CD14-positive monocyte (primary cell): ENCODE measurements at regions of chr10 and their contacts with region 1.

Region 1: GRCh38 chr10:49540066-49540797 is 1.3 kb upstream of the ERCC6 start:
- DNase-seq: peak in 2 of 3 donors; percentile 30 to 52
- H3K4me3 ChIP-seq: peak overlapping the region; percentile 50 to 78 (median 64)
- H3K4me3 Mint-ChIP-seq: peak overlapping the region; percentile 90 to 94
- H3K27ac ChIP-seq: peak overlapping the region; percentile 94 to 100
- H3K27ac Mint-ChIP-seq: peak overlapping the region in 6 of 7 donors; percentile 94 to 99 (median 96)
- H3K4me1 ChIP-seq: peaks cover 30 to 40% of the 10 kb centered on the region in 2 donors
- H3K4me1 Mint-ChIP-seq: peaks cover 43% of the 10 kb centered on the region
- H3K27me3 ChIP-seq: no peaks in the 10 kb centered on the region
- H3K27me3 Mint-ChIP-seq: peaks cover 2% of the 10 kb centered on the region in 3 donors
- CTCF ChIP-seq: no peak

Region 2: DNA sequence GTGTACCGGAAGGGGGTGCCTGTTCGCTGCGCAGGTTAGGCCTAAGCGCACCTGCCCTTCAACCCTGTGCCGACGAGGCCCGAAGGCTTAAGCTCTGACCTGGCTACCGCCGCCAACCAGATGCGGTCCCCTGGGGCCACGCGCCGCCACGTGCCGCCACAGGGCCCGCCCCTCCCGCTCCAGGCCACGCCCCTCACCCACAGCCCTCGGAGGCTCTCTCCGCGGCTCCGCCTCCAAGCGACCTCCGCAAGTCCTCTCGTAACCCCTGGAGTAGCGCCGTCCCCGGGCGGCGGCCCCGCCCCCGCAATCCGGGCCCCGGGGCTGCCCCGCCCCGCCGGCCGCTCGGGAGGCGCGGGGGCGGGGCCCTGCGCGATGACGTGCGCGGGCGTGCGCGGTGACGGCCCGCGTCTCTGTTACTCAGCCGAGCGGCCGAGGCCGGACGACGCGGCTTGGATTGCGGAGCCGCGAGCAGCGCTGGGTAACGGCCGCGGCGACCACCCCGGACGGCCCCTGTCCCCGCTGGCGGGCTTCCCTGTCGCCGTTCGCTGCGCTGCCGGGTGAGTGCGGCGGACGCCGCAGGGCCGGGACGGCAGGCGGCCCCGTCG is 1233.9 kb before region 1 on chr10 and contains the start of gene MAPK8:
- intact Hi-C with region 1: loop called in 1 of 2 experiments (anchors 10 kb)
- DNase-seq: peak; percentile 86 to 94 (median 92)
- H3K4me3 ChIP-seq: peak within 1 kb of the TSS; percentile 47 to 89 (median 62)
- H3K4me3 Mint-ChIP-seq: peak within 1 kb of the TSS; percentile 82 to 83
- H3K27ac ChIP-seq: peak within 1 kb of the TSS in 1 of 2 donors; percentile 79
- H3K27ac Mint-ChIP-seq: peak within 1 kb of the TSS; percentile 54 to 87 (median 84)
- H3K4me1 ChIP-seq: peaks cover 13 to 19% of the 10 kb centered on the region in 2 donors
- H3K4me1 Mint-ChIP-seq: peaks cover 20% of the 10 kb centered on the region
- H3K27me3 ChIP-seq: no peaks in the 10 kb centered on the region
- H3K27me3 Mint-ChIP-seq: peaks cover 2 to 3% (median 3%) of the 10 kb centered on the region in 3 donors
- CTCF ChIP-seq: no peak
- polyA plus RNA-seq, gene MAPK8: 18.4 to 21.1 (median 18.5) TPM

Region 3: GRCh38 chr10:49579621-49580020 is 39.4 kb after region 1 on chr10:
- intact Hi-C with region 1: no loop called
- DNase-seq: no peak
- H3K4me3 ChIP-seq: no peak overlapping the region
- H3K4me3 Mint-ChIP-seq: no peak overlapping the region
- H3K27ac ChIP-seq: no peak overlapping the region
- H3K27ac Mint-ChIP-seq: no peak overlapping the region
- H3K4me1 ChIP-seq: no peaks in the 10 kb centered on the region
- H3K4me1 Mint-ChIP-seq: no peaks in the 10 kb centered on the region
- H3K27me3 ChIP-seq: no peaks in the 10 kb centered on the region
- H3K27me3 Mint-ChIP-seq: peaks cover 5 to 9% (median 8%) of the 10 kb centered on the region in 3 donors
- CTCF ChIP-seq: no peak

Region 4: GRCh38 chr10:49679480-49679893 is 139.3 kb after region 1 on chr10 and contains the start of gene C10orf53:
- intact Hi-C with region 1: no loop called
- DNase-seq: peak in 1 of 3 donors; percentile 7
- H3K4me3 ChIP-seq: peak within 1 kb of the TSS in 1 of 3 experiments; percentile 32
- H3K4me3 Mint-ChIP-seq: peak within 1 kb of the TSS; percentile 17 to 43
- H3K27ac ChIP-seq: no peak within 1 kb of the TSS
- H3K27ac Mint-ChIP-seq: peak within 1 kb of the TSS in 1 of 7 donors; percentile 5
- H3K4me1 ChIP-seq: peaks cover 0 to 4% of the 10 kb centered on the region in 2 donors
- H3K4me1 Mint-ChIP-seq: peaks cover 6% of the 10 kb centered on the region
- H3K27me3 ChIP-seq: peaks cover 23 to 32% of the 10 kb centered on the region in 2 donors
- H3K27me3 Mint-ChIP-seq: peaks cover 23 to 38% (median 24%) of the 10 kb centered on the region in 3 donors
- CTCF ChIP-seq: no peak
- polyA plus RNA-seq, gene C10orf53: not detected